Activated T-helper 1 cell treated with anti-CD3 and anti-CD28 coated beads, Interleukin-12 subunit alpha, Interleukin-12 subunit beta, Interleukin-2, Interleukin-4 antibody, amounts not matched to agents 30 ng/mL and 10 ng/mL and 1 ng/mL, durations not matched to agents 14 hours and 24 hours and 36 hours (primary cell): ENCODE measurements at regions of chr1 and their contacts with region 1.

Region 1: DNA sequence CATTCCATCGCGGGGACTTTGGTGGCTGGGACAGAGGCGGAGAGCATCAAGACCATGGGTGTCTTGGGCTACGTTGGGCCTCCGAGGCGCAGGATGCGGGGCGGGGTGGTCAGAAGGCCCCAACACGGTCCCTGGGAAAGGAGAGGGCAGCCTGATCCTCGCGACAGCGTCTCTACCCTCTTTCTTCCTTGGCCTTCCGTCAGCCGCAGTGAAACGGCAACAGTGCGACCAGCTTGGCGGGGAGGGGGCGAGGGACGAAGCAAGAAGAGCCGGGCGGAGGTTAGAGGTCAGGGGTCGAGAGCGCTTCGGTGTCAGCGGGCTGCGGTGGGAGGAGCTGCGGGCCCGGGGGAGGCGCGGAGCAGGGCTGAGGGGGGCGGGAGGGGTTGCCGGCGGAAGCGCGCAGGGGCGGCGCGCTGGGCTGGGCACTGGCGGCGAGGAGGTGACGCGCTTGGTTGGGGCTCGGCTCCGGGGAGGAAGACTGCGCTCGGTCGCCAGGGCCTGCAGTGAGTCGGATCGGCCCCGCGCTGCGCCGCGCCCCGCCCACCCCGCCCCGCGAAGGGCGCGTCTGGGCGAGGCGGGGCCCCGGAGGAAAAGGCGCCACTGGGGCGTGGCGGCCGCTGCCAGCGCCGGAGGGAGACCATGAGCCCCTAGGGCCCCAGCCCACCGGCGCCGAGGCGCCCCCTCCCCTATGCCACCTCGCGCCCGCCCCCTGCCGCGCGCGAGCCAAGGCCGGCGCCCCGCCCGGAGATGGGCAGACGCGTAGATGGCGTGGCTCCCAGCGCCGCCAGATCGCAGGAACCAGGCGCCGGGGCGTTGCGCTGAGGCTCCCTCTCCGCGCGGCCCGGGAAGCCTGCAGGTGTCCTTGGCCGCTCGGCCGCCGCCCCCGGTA is at the start of gene KCNC4:
- DNase-seq: peak; percentile 88
- H3K4me3 Mint-ChIP-seq: peak within 1 kb of the TSS; percentile 88
- H3K27ac Mint-ChIP-seq: peak within 1 kb of the TSS; percentile 87
- H3K4me1 Mint-ChIP-seq: peaks cover 40% of the 10 kb centered on the region
- H3K27me3 Mint-ChIP-seq: peaks cover 13% of the 10 kb centered on the region
- total RNA-seq, gene KCNC4: 11.8 and 14.3 TPM in 2 replicates

Region 2: GRCh38 chr1:110150330-110151174 is 59.4 kb before region 1 on chr1 and contains the start of gene SLC6A17:
- intact Hi-C with region 1: no loop called
- DNase-seq: no peak
- H3K4me3 Mint-ChIP-seq: no peak within 1 kb of the TSS
- H3K27ac Mint-ChIP-seq: no peak within 1 kb of the TSS
- H3K4me1 Mint-ChIP-seq: no peaks in the 10 kb centered on the region
- H3K27me3 Mint-ChIP-seq: peaks cover 42% of the 10 kb centered on the region
- total RNA-seq, gene SLC6A17: 0.05 and 0.23 TPM in 2 replicates

Region 3: GRCh38 chr1:110188035-110188618 is 21.8 kb before region 1 on chr1:
- intact Hi-C with region 1: no loop called
- DNase-seq: no peak
- H3K4me3 Mint-ChIP-seq: no peak overlapping the region
- H3K27ac Mint-ChIP-seq: no peak overlapping the region
- H3K4me1 Mint-ChIP-seq: no peaks in the 10 kb centered on the region
- H3K27me3 Mint-ChIP-seq: peaks cover 17% of the 10 kb centered on the region

Region 4: DNA sequence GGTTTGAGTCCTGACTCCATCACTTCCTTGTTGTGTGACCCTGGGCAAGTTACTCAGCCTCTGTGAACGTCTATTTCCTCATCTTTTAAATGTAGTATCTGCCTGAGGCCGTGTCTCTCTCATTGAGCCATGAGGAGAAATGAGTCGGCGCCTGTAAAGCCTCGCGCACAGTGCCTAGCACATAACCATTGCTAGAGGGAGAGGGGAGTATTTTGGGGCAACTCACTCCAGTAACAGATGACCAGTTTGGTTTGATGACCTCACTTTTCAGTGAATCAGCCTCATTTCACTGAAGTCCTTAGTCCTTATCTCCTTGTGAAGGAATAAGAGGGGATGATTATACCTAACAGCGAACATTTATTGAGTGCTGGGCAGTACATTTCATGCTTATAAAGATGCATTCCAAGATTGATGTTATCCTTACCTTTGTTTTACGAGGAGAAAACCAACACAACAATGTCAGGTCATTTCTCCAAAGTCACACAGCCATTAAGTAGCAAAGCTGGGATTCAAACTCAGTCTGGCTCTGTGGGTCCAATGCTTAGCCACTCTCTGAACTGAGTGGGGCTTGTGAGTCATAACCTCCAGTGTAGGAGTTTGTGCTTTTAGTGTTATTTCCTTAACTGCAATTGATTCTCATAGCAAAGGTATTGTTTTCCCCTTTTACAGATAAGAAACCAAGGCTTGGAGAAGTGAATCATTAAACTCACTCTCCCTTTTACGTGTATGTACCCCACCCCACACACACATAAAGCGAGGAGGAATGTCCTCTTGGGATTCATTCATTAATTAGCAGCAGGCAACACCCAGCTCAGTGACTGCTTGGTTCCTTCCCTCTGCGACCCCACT is 26.1 kb after region 1 on chr1:
- intact Hi-C with region 1: loop called (anchors 1 kb)
- DNase-seq: no peak
- H3K4me3 Mint-ChIP-seq: no peak overlapping the region
- H3K27ac Mint-ChIP-seq: peak overlapping the region; percentile 80
- H3K4me1 Mint-ChIP-seq: peaks cover 51% of the 10 kb centered on the region
- H3K27me3 Mint-ChIP-seq: no peaks in the 10 kb centered on the region

Region 5: GRCh38 chr1:110262846-110263631 is 53.1 kb after region 1 on chr1:
- intact Hi-C with region 1: loop called (anchors 1 kb)
- DNase-seq: no peak
- H3K4me3 Mint-ChIP-seq: no peak overlapping the region
- H3K27ac Mint-ChIP-seq: no peak overlapping the region
- H3K4me1 Mint-ChIP-seq: peaks cover 7% of the 10 kb centered on the region
- H3K27me3 Mint-ChIP-seq: no peaks in the 10 kb centered on the region

Region 6: DNA sequence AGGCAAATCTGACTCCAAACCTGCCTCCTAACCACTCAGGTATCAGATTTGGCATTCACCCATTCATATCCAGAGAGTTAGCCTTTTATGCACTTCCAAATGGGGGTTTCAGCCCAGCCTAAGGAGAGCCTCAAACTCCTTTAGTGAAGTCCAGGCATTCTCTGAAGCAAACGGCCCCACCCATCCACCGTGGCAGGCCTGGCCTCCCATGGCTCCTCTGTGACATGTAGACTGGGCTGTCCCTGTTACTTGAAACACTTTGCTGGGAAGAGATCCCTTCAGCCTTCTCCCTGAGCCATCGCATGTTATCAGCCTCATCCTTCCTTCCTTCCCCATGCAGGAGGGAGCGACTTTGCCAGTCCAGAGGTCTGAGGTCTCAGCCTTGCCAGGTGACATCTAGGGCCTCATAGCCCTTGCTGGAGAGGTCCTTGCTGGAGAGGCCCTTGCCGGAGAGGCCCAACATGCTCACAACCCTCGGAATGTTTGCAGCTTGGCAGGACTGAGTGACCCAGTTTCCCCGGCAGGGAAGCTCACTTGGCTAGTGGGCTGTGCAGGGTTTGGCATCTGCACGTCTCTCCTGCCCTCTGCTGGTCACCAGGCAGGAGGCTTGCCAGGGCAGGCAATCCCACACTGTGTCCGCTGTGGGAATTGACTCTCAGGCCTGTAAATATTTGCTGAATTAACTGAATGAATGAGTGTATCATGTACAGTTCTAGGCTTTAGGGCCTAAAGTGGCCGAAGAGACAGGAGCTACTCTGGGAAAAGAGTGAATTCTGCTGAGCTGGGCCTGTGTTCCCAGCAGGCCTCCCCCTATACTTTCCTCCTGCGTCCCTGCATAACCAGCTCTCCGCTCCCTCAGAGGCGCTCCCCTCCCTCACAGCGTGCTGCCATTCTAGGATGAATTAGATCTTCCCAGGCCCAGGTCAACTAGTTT is 102.5 kb after region 1 on chr1:
- intact Hi-C with region 1: loop called (anchors 1 kb)
- DNase-seq: peak; percentile 46
- H3K4me3 Mint-ChIP-seq: no peak overlapping the region
- H3K27ac Mint-ChIP-seq: no peak overlapping the region
- H3K4me1 Mint-ChIP-seq: no peaks in the 10 kb centered on the region
- H3K27me3 Mint-ChIP-seq: no peaks in the 10 kb centered on the region

Region 7: DNA sequence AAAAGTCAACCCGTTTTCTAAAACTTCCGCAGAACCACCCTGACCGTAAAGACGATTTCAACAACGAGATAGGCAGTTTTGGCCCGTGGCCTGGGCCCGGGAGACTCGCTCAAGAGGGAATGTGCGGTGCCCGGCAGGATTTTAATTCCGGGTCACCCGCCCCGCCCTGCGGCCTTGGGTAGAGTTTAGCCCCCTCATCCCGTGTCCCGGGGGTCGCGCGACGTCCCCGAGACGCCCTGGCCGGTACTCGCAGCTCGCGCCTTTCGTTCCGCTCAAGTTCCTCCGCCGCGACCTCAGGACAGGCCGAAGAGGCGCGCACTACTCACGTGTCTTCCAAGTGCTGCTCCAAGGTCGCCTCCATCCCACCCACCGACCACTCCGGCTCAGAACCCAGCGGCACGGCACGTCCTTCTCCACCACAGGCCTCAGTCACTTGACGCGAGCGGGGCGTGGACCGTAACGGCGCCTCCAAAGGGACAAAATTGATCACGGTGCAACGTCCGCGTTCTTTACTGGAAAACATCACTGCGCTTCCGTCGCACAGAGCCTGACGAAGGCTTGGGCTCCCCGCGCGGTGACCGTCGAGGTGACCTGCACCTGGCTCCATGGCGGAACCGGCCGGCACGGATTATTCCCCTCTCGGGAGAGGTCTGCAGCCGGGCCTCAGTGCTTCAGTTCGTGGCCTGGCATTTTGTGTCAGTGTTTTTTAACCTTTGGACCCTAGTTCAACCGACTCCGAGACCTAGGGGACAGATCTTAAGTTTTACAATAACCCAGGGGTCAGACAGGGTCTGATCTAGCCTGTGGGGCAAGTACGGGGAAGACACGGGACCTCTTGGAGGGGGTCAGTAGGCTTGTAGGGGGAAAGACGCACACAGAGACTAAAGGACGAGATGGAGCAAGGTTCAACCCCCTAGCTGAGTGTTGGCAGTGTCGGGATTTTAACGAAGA is 197.6 kb after region 1 on chr1 and contains the start of gene LAMTOR5:
- intact Hi-C with region 1: loop called (anchors 1 kb)
- DNase-seq: peak; percentile 90
- H3K4me3 Mint-ChIP-seq: peak within 1 kb of the TSS; percentile 100
- H3K27ac Mint-ChIP-seq: peak within 1 kb of the TSS; percentile 100
- H3K4me1 Mint-ChIP-seq: peaks cover 22% of the 10 kb centered on the region
- H3K27me3 Mint-ChIP-seq: no peaks in the 10 kb centered on the region
- total RNA-seq, gene LAMTOR5: 163 and 184 TPM in 2 replicates

Region 8: DNA sequence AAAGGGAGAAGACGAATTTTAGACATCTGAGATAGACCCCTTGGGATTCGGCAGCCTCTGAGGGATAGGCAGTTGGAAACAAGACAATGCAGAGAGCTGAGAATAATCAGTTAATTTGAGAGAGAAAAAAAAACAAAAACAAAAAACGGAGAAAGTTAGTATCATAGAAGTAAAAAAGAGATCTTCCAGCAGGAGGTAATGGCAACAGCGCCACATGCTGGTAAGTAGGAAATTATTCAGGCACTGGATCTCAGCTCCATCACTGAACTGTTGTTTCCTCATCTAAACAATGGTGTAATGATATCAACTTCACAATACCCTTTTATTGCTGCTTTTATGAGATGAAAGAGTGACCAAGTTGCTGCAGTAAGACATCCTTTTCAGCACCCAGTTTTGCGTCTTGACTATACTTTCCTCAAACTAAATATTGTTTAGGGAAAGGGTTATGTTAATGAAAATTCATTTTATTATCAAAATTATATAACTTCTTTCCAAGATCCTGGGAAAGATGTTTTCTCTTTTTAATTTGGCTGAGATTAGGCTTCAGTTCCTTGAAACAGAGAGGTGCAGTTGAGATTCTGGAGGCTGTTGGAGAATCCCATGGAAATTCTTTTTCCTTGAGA is 556.2 kb after region 1 on chr1:
- intact Hi-C with region 1: loop called (anchors 2 kb)
- DNase-seq: peak; percentile 34
- H3K4me3 Mint-ChIP-seq: no peak overlapping the region
- H3K27ac Mint-ChIP-seq: no peak overlapping the region
- H3K4me1 Mint-ChIP-seq: peaks cover 14% of the 10 kb centered on the region
- H3K27me3 Mint-ChIP-seq: peaks cover 17% of the 10 kb centered on the region

Region 9: DNA sequence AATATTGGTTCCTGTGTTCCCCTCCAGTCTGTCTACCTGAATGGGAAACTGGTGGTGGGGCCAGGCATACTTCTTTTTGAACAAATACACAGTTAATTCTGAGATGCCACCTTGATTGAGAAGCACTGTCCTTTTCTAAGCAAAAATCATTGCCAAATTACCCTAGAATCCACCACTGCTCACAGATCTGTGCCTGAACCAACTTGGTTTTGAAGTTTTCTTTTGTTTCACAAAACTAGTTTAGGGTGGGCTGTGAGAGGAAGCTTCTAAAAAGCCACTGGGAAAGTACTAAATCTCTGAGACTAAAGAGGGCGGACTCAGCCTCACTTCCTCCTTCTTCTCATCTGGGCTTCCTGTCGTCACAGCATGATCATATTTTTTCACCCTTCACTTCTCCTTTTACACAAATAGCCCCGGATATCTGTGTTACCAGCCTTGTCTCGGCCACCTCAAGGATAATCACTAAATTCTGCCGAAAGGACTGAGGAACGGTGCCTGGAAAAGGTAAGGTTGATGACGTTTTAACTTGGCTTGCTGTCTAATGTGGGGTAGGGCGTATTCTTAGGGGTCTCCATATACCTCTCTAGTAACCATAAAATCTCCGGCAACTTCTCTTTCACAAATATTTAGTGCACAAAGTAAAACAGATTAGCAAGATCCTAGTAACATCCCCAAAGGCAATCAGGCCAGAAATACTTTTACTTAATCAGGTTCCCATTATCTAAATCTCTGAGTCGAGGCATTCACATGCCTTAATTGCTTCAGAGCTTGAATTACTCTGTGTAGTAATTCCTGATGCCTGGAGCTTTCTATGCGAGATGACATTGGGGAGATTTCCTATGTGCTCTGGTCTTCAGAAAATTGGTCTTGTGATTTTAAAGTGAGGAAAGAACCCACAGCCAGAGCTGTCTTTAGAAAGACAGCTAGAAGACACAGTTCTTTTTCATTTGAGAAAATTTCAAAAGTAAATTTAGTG is 663.1 kb after region 1 on chr1 and contains the start of gene CD53:
- intact Hi-C with region 1: loop called (anchors 5 kb)
- DNase-seq: peak; percentile 47
- H3K4me3 Mint-ChIP-seq: peak within 1 kb of the TSS; percentile 99
- H3K27ac Mint-ChIP-seq: peak within 1 kb of the TSS; percentile 98
- H3K4me1 Mint-ChIP-seq: peaks cover 49% of the 10 kb centered on the region
- H3K27me3 Mint-ChIP-seq: no peaks in the 10 kb centered on the region
- total RNA-seq, gene CD53: 201 and 204 TPM in 2 replicates